CD8-positive, alpha-beta T cell (primary cell): ENCODE measurements at regions of chr4 and their contacts with region 1.

Region 1: DNA sequence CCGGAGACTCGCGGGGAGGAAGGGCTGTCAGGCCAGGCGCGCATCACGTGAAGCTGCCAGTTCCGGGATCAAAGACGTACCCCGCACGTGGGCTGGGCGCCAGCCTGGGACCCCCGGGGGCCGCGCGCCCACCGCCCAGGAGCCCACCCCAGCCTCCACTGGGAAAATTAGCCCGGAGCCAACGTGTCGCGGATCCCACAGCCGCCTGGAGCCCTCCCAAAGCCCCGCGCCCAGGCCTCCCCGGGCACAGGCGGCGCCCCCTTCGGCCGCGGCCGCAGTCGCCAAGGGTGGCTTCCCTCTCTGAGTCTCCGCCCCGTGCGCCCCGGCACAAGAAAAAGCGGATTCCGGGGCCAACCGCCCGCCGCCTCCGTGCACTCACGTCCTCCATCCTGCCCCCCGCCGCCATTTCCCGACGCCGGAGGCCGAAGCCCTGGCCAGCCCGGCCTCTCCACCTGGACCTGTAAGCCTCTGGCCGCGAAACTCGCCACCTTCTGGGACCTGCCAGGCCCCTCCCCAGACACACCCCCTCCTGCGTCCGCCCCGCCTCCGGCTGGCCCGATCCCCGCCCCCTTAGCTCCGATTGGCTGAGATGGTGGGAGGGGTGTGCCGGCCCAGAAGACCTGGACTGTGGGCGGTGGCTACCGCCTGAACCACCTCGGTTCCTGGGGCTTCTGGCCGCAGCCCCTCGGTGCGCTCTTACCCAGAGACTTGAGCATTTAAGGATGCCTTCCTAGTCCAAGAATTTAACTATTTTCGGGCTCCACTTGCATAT is at the start of gene TMEM192:
- DNase-seq: peak; percentile 85 to 94 (median 91)
- ATAC-seq: peak; percentile 98
- H3K4me3 ChIP-seq: peak within 1 kb of the TSS; percentile 57 to 84
- H3K4me3 Mint-ChIP-seq: peak within 1 kb of the TSS; percentile 90
- H3K27ac ChIP-seq: peak within 1 kb of the TSS; percentile 66 to 73
- H3K27ac Mint-ChIP-seq: peak within 1 kb of the TSS; percentile 95
- H3K4me1 ChIP-seq: peaks cover 15% of the 10 kb centered on the region
- H3K4me1 Mint-ChIP-seq: peaks cover 27% of the 10 kb centered on the region
- H3K27me3 ChIP-seq: no peaks in the 10 kb centered on the region
- H3K27me3 Mint-ChIP-seq: peaks cover 4% of the 10 kb centered on the region
- CTCF ChIP-seq: no peak
- total RNA-seq, gene TMEM192: 5.6 to 5.8 TPM

Region 2: DNA sequence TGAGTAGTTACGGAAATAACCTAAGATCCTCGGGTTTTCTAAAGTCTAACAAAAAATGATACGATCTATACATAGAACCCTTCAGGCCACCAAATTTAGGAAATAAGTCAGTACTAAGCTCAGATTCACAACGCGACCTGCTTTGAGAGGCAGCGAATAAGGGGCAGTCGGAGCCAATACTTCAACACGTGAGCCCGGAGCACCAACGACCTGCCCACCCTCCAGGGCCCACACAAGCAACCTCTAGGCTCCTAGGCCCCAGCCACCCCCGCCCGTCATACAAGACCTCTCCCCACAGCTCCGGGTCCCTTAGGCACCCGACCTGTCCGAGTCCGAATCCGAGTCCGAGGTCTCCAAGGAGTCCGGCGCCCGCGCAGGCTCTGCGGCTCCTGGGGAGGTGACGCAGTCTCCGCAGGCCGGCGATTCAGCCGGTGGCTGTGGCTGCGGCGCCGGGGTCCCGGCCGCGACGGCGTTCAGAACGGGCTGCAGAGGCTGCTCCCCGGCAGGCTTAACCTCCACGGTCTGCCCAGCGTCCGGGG is 1946.4 kb before region 1 on chr4:
- CTCF ChIA-PET with region 1: no interaction called
- POLR2A ChIA-PET with region 1: no interaction called
- intact Hi-C with region 1: loop called (anchors 2 to 10 kb)
- DNase-seq: peak; percentile 12 to 73 (median 48)
- ATAC-seq: peak; percentile 54
- H3K4me3 ChIP-seq: peak overlapping the region; percentile 82 to 91
- H3K4me3 Mint-ChIP-seq: peak overlapping the region; percentile 93
- H3K27ac ChIP-seq: peak overlapping the region; percentile 93 to 97
- H3K27ac Mint-ChIP-seq: peak overlapping the region; percentile 98
- H3K4me1 ChIP-seq: peaks cover 26% of the 10 kb centered on the region
- H3K4me1 Mint-ChIP-seq: peaks cover 49% of the 10 kb centered on the region
- H3K27me3 ChIP-seq: no peaks in the 10 kb centered on the region
- H3K27me3 Mint-ChIP-seq: no peaks in the 10 kb centered on the region
- CTCF ChIP-seq: no peak

Region 3: GRCh38 chr4:163494360-163495162 is 1618.0 kb before region 1 on chr4 and contains the start of gene TMA16:
- CTCF ChIA-PET with region 1: no interaction called
- POLR2A ChIA-PET with region 1: no interaction called
- intact Hi-C with region 1: loop called (anchors 5 to 10 kb)
- DNase-seq: peak; percentile 55 to 90 (median 74)
- ATAC-seq: peak; percentile 80
- H3K4me3 ChIP-seq: peak within 1 kb of the TSS; percentile 97 to 98
- H3K4me3 Mint-ChIP-seq: peak within 1 kb of the TSS; percentile 95
- H3K27ac ChIP-seq: peak within 1 kb of the TSS; percentile 67 to 82
- H3K27ac Mint-ChIP-seq: peak within 1 kb of the TSS; percentile 89
- H3K4me1 ChIP-seq: peaks cover 11% of the 10 kb centered on the region
- H3K4me1 Mint-ChIP-seq: peaks cover 43% of the 10 kb centered on the region
- H3K27me3 ChIP-seq: no peaks in the 10 kb centered on the region
- H3K27me3 Mint-ChIP-seq: no peaks in the 10 kb centered on the region
- CTCF ChIP-seq: no peak
- total RNA-seq, gene TMA16: 3.6 to 4.2 TPM

Region 4: GRCh38 chr4:164956766-164957643 is 155.5 kb before region 1 on chr4:
- CTCF ChIA-PET with region 1: no interaction called
- POLR2A ChIA-PET with region 1: no interaction called
- intact Hi-C with region 1: loop called in 1 of 2 experiments (anchors 5 kb)
- DNase-seq: peak; percentile 34 to 86 (median 74)
- ATAC-seq: peak; percentile 99
- H3K4me3 ChIP-seq: peak overlapping the region; percentile 68 to 87
- H3K4me3 Mint-ChIP-seq: peak overlapping the region; percentile 87
- H3K27ac ChIP-seq: peak overlapping the region; percentile 7 to 8
- H3K27ac Mint-ChIP-seq: peak overlapping the region; percentile 84
- H3K4me1 ChIP-seq: peaks cover 18% of the 10 kb centered on the region
- H3K4me1 Mint-ChIP-seq: peaks cover 22% of the 10 kb centered on the region
- H3K27me3 ChIP-seq: no peaks in the 10 kb centered on the region
- H3K27me3 Mint-ChIP-seq: peaks cover 7% of the 10 kb centered on the region
- CTCF ChIP-seq: no peak

Region 5: GRCh38 chr4:165207431-165208220 is 95.1 kb after region 1 on chr4 and contains the start of gene KLHL2:
- CTCF ChIA-PET with region 1: interaction called, 5 read pairs
- POLR2A ChIA-PET with region 1: interaction called, 3 read pairs
- intact Hi-C with region 1: loop called (anchors 1 to 5 kb)
- DNase-seq: peak; percentile 33 to 83 (median 67)
- ATAC-seq: peak; percentile 74
- H3K4me3 ChIP-seq: peak within 1 kb of the TSS; percentile 83 to 95
- H3K4me3 Mint-ChIP-seq: peak within 1 kb of the TSS; percentile 92
- H3K27ac ChIP-seq: peak within 1 kb of the TSS; percentile 40 to 59
- H3K27ac Mint-ChIP-seq: peak within 1 kb of the TSS; percentile 92
- H3K4me1 ChIP-seq: peaks cover 31% of the 10 kb centered on the region
- H3K4me1 Mint-ChIP-seq: peaks cover 66% of the 10 kb centered on the region
- H3K27me3 ChIP-seq: no peaks in the 10 kb centered on the region
- H3K27me3 Mint-ChIP-seq: no peaks in the 10 kb centered on the region
- CTCF ChIP-seq: no peak
- total RNA-seq, gene KLHL2: 17.5 to 18.4 TPM

Region 6: GRCh38 chr4:165327211-165328100 is 214.9 kb after region 1 on chr4 and contains the start of gene MSMO1:
- CTCF ChIA-PET with region 1: interaction called, 5 read pairs
- POLR2A ChIA-PET with region 1: interaction called, 4 read pairs
- intact Hi-C with region 1: loop called (anchors 1 to 2 kb)
- DNase-seq: peak; percentile 95 to 99 (median 98)
- ATAC-seq: peak; percentile 95
- H3K4me3 ChIP-seq: peak within 1 kb of the TSS; percentile 64 to 92
- H3K4me3 Mint-ChIP-seq: no peak within 1 kb of the TSS
- H3K27ac ChIP-seq: peak within 1 kb of the TSS; percentile 84 to 87
- H3K27ac Mint-ChIP-seq: no peak within 1 kb of the TSS
- H3K4me1 ChIP-seq: peaks cover 21% of the 10 kb centered on the region
- H3K4me1 Mint-ChIP-seq: peaks cover 37% of the 10 kb centered on the region
- H3K27me3 ChIP-seq: no peaks in the 10 kb centered on the region
- H3K27me3 Mint-ChIP-seq: no peaks in the 10 kb centered on the region
- CTCF ChIP-seq: no peak
- total RNA-seq, gene MSMO1: 18.6 to 19.2 TPM

Region 7: GRCh38 chr4:165464813-165465381 is 352.3 kb after region 1 on chr4:
- CTCF ChIA-PET with region 1: interaction called, 7 read pairs
- POLR2A ChIA-PET with region 1: no interaction called
- intact Hi-C with region 1: loop called in 1 of 2 experiments (anchors 5 kb)
- DNase-seq: peak in 4 of 9 experiments; percentile 9 to 66 (median 35)
- ATAC-seq: peak; percentile 42
- H3K4me3 ChIP-seq: no peak overlapping the region
- H3K4me3 Mint-ChIP-seq: no peak overlapping the region
- H3K27ac ChIP-seq: no peak overlapping the region
- H3K27ac Mint-ChIP-seq: no peak overlapping the region
- H3K4me1 ChIP-seq: no peaks in the 10 kb centered on the region
- H3K4me1 Mint-ChIP-seq: no peaks in the 10 kb centered on the region
- H3K27me3 ChIP-seq: no peaks in the 10 kb centered on the region
- H3K27me3 Mint-ChIP-seq: peaks cover 3% of the 10 kb centered on the region
- CTCF ChIP-seq: peak; percentile 86